ENCODE measurements at regions of chr10 and their contacts with region 1.

Region 1: GRCh38 chr10:68406815-68407548 is at the start of gene RUFY2:
- DNase-seq: peak; percentile 93
- CTCF ChIP-seq: peak; percentile 92

Region 2: DNA sequence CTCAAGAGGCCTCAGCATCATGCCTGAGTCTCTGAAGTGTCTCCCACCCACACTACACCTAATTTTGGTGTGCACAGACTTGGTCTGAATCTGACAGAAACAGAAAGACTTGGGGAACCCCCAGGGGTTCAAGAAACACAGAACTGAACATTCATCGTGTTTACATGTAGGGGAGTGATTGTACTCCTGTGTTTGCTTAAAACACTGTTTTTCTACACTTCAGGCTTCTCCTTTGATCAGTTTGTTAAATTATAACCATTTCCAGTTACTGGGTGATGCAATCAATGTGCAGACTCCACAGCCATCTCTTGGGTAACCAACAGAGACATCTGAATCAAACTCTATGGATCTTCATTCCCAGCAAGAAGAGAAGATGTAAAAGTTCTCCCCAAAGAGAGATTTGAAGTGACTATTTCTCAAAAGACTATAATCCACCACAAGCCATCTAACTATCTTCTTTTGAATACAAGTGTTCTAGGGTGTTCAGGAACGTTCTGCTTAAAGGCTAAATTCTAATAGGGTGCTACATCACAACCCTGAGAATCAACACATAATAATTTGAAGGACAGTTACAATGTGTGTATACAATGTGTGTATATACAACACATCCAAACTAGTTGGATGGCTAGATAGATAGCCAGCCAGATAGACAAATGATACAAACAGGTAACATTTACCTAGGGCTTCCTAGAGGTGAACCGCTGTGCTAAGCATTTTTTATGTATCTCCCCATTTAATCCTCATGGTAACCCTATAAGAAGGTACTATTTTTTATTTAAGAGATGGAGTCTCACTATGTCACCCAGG is 603.2 kb before region 1 on chr10:
- CTCF ChIA-PET with region 1: no interaction called
- POLR2A ChIA-PET with region 1: no interaction called
- DNase-seq: peak; percentile 52
- CTCF ChIP-seq: no peak

Region 3: DNA sequence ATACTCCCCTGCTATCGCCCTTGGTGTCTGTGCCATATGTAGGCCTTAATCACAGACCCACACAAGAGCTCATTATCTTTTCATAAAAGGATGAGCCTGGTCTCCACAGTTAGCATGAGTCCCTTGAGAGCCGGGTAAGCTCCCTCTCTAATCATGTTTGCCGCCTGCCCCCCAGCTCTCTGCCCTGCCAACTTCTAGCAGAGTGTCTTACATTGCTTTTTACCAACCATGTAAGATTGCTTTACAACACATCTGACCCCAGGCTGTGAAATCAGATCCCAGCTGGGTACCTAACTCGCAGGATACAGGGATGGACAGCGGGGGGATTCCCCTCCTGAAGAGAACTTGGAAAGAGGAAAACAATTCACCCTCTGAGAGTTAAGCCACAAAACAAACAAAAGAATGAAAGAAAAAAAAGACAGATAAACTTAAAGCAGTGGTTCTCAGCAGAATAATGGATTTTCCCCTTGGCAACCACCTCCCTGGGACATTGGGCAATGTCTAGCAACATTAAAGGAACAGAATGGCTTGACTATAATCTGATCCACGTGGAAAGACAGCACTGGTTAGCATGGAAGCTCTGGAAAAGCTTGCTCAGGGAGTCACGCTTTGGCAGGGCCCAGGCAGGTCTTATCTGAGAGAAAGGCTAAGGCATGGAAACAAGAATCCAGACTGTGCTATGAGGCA is 135.6 kb before region 1 on chr10:
- CTCF ChIA-PET with region 1: no interaction called
- POLR2A ChIA-PET with region 1: no interaction called
- DNase-seq: no peak
- CTCF ChIP-seq: no peak

Region 4: DNA sequence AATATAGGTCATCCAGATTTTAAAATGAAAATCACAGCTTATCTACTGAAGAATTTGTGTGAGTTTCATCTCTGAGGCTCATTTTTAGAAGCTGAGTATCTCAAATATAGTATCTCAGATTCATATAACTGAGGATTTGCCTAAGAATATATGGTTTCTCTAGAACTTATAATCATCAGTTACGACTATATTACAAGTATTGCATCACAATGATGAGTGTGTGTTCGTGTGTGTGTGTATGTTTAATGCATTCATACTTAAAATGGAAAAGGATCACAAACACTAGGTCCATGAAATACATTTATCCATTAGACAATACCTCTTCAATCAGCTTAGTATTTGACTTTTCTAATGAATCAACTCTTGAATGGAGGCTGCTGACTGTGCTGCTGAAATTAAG is 21.2 kb before region 1 on chr10:
- CTCF ChIA-PET with region 1: interaction called, 15 read pairs
- POLR2A ChIA-PET with region 1: no interaction called
- DNase-seq: no peak
- CTCF ChIP-seq: no peak

Region 5: GRCh38 chr10:68423522-68423921 is 16.5 kb after region 1 on chr10:
- CTCF ChIA-PET with region 1: interaction called, 10 read pairs
- POLR2A ChIA-PET with region 1: no interaction called
- DNase-seq: no peak
- CTCF ChIP-seq: no peak

Region 6: GRCh38 chr10:68471586-68472408 is 64.8 kb after region 1 on chr10 and contains the start of gene DNA2:
- CTCF ChIA-PET with region 1: no interaction called
- POLR2A ChIA-PET with region 1: no interaction called
- DNase-seq: peak; percentile 95
- CTCF ChIP-seq: no peak

Measured in GM10248 (cell line).